ENCODE measurements at regions of chr17 and their contacts with region 1.

Region 1: DNA sequence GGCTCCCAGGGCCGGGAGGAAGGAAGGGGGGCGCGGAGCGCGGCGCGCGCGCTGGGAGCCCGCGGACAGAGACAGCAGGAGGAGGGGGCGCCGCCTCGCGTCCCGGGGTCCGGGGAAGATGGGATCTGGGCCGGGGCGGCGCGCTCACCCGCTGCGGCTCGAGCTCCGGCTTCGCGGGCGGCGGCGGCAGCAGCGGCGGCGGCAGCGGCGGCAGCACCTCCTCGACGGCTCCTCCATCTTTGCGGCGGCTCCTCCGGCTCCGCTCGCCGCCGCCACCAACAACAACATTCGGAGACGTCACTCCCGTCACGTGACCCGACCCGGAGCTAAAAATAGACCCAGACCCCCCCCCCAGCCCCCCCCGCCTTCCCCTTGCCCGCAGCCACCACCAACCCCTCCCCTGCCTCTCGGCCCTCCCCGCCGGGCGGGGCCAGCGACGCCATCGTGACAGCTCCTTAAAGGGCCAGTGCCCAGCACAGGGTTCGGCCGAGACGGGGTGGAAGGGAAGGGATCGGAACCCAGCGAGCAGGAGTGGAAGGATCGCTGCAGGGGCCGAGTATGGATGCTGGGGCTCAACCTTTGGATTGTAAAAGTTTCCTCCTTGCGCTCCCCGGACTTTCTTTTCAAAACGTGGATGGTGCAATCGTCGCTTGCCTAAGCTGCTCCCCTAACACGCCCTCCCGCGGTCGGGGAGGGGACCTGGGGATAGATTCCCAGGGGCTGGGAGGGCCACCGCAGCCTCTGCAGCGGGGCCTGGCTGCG is at the start of gene HDAC5:
- DNase-seq: peak; percentile 89 to 98 (median 94)
- ATAC-seq: peak; percentile 90 to 93
- H3K4me3 Mint-ChIP-seq: peak within 1 kb of the TSS; percentile 89 to 99 (median 95)
- H3K27ac Mint-ChIP-seq: peak within 1 kb of the TSS; percentile 90 to 98 (median 95)
- H3K4me1 Mint-ChIP-seq: peaks cover 29 to 49% (median 45%) of the 10 kb centered on the region in 4 donors
- H3K27me3 Mint-ChIP-seq: no peaks in the 10 kb centered on the region
- polyA plus RNA-seq, gene HDAC5: 25.3 to 41.8 (median 27.2) TPM

Region 2: DNA sequence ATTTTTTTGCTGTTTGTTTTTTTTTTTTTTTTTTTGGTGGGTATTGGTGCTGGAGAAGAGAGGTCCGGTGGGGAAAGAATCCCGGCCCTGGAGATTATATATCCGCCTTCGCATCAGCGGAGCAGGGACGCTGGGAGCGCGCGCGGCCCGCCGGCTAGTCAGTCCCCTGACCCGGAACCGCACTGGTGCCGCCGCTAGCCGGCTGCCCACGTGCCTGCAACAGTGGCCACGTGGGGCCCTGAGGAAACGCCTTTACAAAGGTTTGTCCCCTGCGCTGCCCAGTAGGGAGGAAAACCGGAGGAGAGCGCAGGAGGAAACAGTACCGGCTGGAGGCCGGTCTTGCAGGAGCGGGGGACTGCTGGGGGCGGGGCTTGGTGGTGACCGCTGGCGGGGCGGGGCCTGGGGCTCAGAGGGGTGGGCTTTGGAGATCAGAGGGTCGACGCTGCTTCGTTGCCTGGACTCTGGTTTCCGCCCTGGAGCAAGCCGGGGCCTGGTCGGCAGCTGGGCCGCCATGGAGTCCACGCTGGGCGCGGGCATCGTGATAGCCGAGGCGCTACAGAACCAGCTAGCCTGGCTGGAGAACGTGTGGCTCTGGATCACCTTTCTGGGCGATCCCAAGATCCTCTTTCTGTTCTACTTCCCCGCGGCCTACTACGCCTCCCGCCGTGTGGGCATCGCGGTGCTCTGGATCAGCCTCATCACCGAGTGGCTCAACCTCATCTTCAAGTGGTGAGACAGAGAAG is 52.9 kb before region 1 on chr17 and contains the start of gene G6PC3:
- POLR2A ChIA-PET with region 1: interaction called, 16 read pairs
- DNase-seq: peak; percentile 43 to 86 (median 68)
- ATAC-seq: peak; percentile 51 to 61
- H3K4me3 Mint-ChIP-seq: peak within 1 kb of the TSS; percentile 87 to 98 (median 96)
- H3K27ac Mint-ChIP-seq: peak within 1 kb of the TSS; percentile 90 to 97 (median 95)
- H3K4me1 Mint-ChIP-seq: peaks cover 23 to 52% (median 49%) of the 10 kb centered on the region in 4 donors
- H3K27me3 Mint-ChIP-seq: no peaks in the 10 kb centered on the region
- polyA plus RNA-seq, gene G6PC3: 25.5 to 31.3 (median 26.6) TPM

Region 3: GRCh38 chr17:44110823-44111633 is 12.5 kb before region 1 on chr17:
- POLR2A ChIA-PET with region 1: interaction called, 16 read pairs
- DNase-seq: peak; percentile 40 to 87 (median 62)
- ATAC-seq: peak; percentile 78 to 81
- H3K4me3 Mint-ChIP-seq: peak overlapping the region; percentile 32 to 80 (median 66)
- H3K27ac Mint-ChIP-seq: peak overlapping the region in 3 of 10 donors; percentile 19 to 67 (median 46)
- H3K4me1 Mint-ChIP-seq: peaks cover 27 to 61% (median 45%) of the 10 kb centered on the region in 4 donors
- H3K27me3 Mint-ChIP-seq: no peaks in the 10 kb centered on the region

Region 4: GRCh38 chr17:44229090-44229489 is 105.6 kb after region 1 on chr17:
- POLR2A ChIA-PET with region 1: no interaction called
- DNase-seq: no peak
- ATAC-seq: no peak
- H3K4me3 Mint-ChIP-seq: no peak overlapping the region
- H3K27ac Mint-ChIP-seq: no peak overlapping the region
- H3K4me1 Mint-ChIP-seq: no peaks in the 10 kb centered on the region
- H3K27me3 Mint-ChIP-seq: peaks cover 0 to 1% (median 0%) of the 10 kb centered on the region in 5 donors

Measured in naive thymus-derived CD8-positive, alpha-beta T cell (primary cell).